ENCODE measurements at regions of chr15 and their contacts with region 1.

Region 1: GRCh38 chr15:65792130-65792987 is at the start of gene DENND4A:
- DNase-seq: peak; percentile 98 to 99 (median 98)
- H3K4me3 ChIP-seq: peak within 1 kb of the TSS; percentile 95
- H3K27ac ChIP-seq: peak within 1 kb of the TSS; percentile 98 to 99
- H3K4me1 ChIP-seq: peaks cover 4% of the 10 kb centered on the region
- H3K27me3 ChIP-seq: no peaks in the 10 kb centered on the region
- CTCF ChIP-seq: no peak
- EP300 ChIP-seq: peak; percentile 36
- POLR2A ChIP-seq: peak; percentile 84
- total RNA-seq, gene DENND4A: 40.0 to 63.9 (median 53.5) TPM

Region 2: GRCh38 chr15:65888981-65889380 is 96.6 kb after region 1 on chr15:
- intact Hi-C with region 1: no loop called
- DNase-seq: no peak
- H3K4me3 ChIP-seq: no peak overlapping the region
- H3K27ac ChIP-seq: no peak overlapping the region
- H3K4me1 ChIP-seq: no peaks in the 10 kb centered on the region
- H3K27me3 ChIP-seq: no peaks in the 10 kb centered on the region
- CTCF ChIP-seq: no peak
- EP300 ChIP-seq: no peak
- POLR2A ChIP-seq: no peak

Region 3: GRCh38 chr15:66504563-66505429 is 712.4 kb after region 1 on chr15 and contains the starts of genes RPL4 and ZWILCH:
- intact Hi-C with region 1: loop called in 1 of 4 experiments (anchors 5 kb)
- DNase-seq: peak; percentile 74 to 88 (median 83)
- H3K4me3 ChIP-seq: peak within 1 kb of the TSS; percentile 68
- H3K27ac ChIP-seq: peak within 1 kb of the TSS; percentile 82 to 87
- H3K4me1 ChIP-seq: peaks cover 3% of the 10 kb centered on the region
- H3K27me3 ChIP-seq: no peaks in the 10 kb centered on the region
- CTCF ChIP-seq: peak in 2 of 3 donors; percentile 25 to 52
- EP300 ChIP-seq: no peak
- POLR2A ChIP-seq: peak; percentile 95
- total RNA-seq, gene RPL4: 3,226 to 5,904 (median 4,447) TPM
- total RNA-seq, gene ZWILCH: 3.5 to 9.6 (median 6.8) TPM

Measured in ovary (tissue), 10 donors.